Prostate gland (tissue), 2 donors: ENCODE measurements at regions of chr14 and their contacts with region 1.

Region 1: GRCh38 chr14:92783816-92784431 is 10.2 kb upstream of the GOLGA5 start:
- DNase-seq: peak; percentile 54
- H3K4me3 ChIP-seq: no peak overlapping the region
- H3K27ac ChIP-seq: peak overlapping the region in 1 of 2 donors; percentile 57
- H3K4me1 ChIP-seq: no peaks in the 10 kb centered on the region
- H3K27me3 ChIP-seq: no peaks in the 10 kb centered on the region
- CTCF ChIP-seq: peak in 3 of 4 experiments; percentile 76 to 86 (median 80)
- POLR2A ChIP-seq: no peak

Region 2: GRCh38 chr14:92686900-92687444 is 97.0 kb before region 1 on chr14:
- intact Hi-C with region 1: loop called (anchors 2 kb)
- DNase-seq: peak; percentile 69
- H3K4me3 ChIP-seq: peak overlapping the region; percentile 18 to 33
- H3K27ac ChIP-seq: peak overlapping the region in 1 of 2 donors; percentile 0
- H3K4me1 ChIP-seq: peaks cover 2% of the 10 kb centered on the region
- H3K27me3 ChIP-seq: no peaks in the 10 kb centered on the region
- CTCF ChIP-seq: peak; percentile 71 to 94 (median 83)
- POLR2A ChIP-seq: no peak

Region 3: DNA sequence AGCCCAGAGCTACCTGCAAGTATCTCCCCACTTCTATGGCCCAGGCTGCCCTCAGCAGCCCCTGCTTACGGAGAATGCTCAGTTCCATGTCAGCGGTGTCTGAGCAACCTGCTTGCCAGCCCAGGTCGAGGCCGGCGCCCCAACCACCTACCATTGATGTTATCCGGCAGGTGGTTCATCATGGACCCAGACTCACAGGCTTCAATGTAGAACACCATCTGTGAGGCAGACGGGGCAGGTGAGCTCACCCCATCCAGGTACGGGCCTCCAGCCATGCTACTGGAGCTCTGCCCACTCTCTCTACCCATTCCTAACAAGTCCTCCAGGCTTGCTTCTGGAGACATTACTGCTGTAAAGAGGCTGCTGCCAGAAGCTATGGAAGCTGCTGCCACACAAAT is 71.3 kb before region 1 on chr14:
- intact Hi-C with region 1: loop called (anchors 5 kb)
- DNase-seq: no peak
- H3K4me3 ChIP-seq: no peak overlapping the region
- H3K27ac ChIP-seq: no peak overlapping the region
- H3K4me1 ChIP-seq: no peaks in the 10 kb centered on the region
- H3K27me3 ChIP-seq: no peaks in the 10 kb centered on the region
- CTCF ChIP-seq: no peak
- POLR2A ChIP-seq: no peak